GM18951 (cell line): ENCODE measurements at regions of chr5 and their contacts with region 1.

Region 1: DNA sequence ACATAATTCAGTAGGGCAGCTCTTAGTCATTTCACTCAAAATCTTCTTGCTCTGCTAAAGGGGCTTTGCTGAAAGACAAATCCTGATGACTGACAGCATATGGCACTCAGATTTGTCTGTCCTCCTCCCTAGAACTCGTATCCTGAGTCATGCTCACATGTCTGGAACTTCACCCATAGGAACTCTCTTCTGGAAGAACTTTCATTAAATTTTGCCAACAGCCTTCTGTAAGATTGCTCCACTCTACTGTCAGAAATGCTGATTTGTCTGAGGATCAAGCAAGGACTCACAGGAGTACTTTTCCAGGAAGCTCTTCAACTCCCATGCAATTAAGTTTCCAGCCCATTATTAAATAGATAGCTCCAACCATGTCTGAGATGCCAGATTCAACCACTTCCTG is 59.8 kb upstream of the SNX2 start:
- POLR2A ChIP-seq: no peak

Region 2: DNA sequence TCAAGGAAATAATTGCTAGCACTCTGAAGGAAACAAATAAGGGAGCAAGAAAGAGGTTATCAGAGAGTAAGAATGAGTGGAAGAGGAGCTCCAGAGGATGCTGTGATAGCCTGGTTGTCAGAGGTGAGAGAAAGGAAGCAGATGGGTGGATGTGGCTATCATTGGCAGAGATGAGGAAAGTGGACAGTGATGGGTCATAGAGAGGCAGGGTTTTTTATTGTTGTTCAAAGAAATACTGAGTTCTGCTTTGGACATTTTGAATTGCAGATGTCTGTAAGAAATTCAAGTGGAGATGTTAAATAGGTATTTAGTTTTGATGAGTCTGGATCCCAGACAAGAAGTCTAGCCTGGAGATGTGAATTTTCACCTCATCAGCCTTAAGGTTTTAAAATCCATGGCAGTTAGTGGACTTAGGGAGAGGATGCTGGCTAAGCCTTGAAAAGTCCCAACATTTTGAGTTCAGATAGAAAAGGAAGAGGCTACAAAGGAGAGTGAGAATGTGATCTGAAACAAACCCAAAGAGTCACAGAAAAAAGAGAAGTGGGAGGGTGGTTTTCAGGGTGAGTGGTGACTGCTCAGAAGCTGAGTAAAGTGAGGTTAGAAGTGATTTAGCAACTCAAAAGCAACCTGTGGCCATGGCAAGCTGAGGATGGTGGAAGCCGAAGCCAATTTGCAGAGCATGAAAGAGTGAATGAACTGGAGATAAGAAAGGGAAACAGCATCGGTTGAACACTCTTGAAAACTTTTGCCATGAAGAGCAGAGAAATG is 271.0 kb after region 1 on chr5:
- in situ Hi-C with region 1: loop called (anchors 10 kb)
- POLR2A ChIP-seq: no peak